ENCODE measurements at regions of chr7 and their contacts with region 1.

Region 1: DNA sequence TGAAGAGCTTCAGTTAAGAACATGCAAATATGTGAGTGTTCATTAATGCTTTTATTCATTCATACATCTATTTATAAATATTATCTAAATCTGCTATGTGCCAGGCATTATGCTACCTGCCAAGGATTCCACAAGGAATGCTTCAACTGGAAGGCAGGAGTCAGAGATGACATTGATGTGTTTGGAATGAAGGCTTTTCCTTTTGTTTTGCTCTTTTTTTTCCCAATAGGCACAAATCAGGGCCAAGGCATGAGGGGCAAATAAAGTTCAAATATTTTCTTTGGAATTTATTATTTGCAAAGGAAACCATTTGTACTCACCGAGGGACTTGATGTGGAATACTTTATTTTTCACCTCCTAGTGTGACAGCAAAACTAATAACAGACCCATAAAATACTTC is 530.3 kb downstream of the ARL4A start:
- DNase-seq: no peak
- H3K4me3 Mint-ChIP-seq: no peak overlapping the region
- H3K27ac Mint-ChIP-seq: no peak overlapping the region
- H3K4me1 Mint-ChIP-seq: no peaks in the 10 kb centered on the region
- H3K27me3 Mint-ChIP-seq: no peaks in the 10 kb centered on the region
- CTCF ChIP-seq: no peak

Region 2: GRCh38 chr7:13179102-13179501 is 38.7 kb before region 1 on chr7:
- CTCF ChIA-PET with region 1: interaction called, 13 read pairs
- intact Hi-C with region 1: no loop called
- DNase-seq: no peak
- H3K4me3 Mint-ChIP-seq: no peak overlapping the region
- H3K27ac Mint-ChIP-seq: no peak overlapping the region
- H3K4me1 Mint-ChIP-seq: peaks cover 13% of the 10 kb centered on the region
- H3K27me3 Mint-ChIP-seq: no peaks in the 10 kb centered on the region
- CTCF ChIP-seq: no peak

Measured in Calu3 (cell line).